Body of pancreas (tissue), 4 donors: ENCODE measurements at regions of chr15 and their contacts with region 1.

Region 1: DNA sequence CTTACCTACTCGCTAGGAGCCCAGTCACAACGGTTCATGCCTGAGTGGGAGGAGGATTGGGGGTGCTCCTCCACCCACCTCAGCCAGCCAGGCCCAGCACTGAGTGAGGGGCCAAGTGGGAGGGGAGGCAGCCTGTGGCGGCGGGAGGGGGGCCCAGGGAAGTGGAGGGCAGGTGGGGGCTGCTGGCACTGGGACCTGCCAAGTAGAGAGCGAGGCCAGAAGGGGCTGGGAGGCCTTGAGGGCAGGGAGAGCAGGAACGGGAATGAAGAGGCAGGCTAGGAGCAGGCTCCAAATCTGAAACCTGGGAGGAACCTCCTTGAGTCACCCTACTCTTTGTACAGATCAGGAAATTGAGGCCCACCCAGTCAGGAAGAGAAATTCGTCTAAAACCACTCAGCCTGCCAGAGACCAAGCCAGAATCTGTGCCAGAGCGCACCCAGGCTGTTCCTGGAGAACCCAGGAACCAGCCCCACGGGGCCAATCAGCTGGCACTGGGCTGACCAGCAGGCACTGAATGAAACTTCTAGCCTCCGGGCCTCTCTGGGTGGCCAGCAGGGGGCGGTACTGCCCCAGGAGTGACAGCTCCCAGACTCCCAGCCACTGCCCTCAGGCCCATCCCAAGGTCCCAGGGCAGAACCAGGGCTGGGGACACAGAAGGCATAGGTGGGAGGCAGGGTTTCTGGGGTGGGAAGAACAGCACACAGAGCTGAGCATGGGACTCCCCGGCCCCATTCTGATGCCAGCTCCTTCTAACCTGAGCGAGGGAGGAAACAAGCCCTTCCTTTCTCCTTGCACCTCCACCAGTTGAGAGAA is 14.8 kb upstream of the CYP11A1 start:
- DNase-seq: peak; percentile 82 to 88 (median 85)
- ATAC-seq: peak; percentile 81
- H3K4me3 ChIP-seq: no peak overlapping the region
- H3K27ac ChIP-seq: no peak overlapping the region
- H3K4me1 ChIP-seq: no peaks in the 10 kb centered on the region
- H3K27me3 ChIP-seq: no peaks in the 10 kb centered on the region
- CTCF ChIP-seq: peak; percentile 73 to 91 (median 83)
- POLR2A ChIP-seq: no peak

Region 2: DNA sequence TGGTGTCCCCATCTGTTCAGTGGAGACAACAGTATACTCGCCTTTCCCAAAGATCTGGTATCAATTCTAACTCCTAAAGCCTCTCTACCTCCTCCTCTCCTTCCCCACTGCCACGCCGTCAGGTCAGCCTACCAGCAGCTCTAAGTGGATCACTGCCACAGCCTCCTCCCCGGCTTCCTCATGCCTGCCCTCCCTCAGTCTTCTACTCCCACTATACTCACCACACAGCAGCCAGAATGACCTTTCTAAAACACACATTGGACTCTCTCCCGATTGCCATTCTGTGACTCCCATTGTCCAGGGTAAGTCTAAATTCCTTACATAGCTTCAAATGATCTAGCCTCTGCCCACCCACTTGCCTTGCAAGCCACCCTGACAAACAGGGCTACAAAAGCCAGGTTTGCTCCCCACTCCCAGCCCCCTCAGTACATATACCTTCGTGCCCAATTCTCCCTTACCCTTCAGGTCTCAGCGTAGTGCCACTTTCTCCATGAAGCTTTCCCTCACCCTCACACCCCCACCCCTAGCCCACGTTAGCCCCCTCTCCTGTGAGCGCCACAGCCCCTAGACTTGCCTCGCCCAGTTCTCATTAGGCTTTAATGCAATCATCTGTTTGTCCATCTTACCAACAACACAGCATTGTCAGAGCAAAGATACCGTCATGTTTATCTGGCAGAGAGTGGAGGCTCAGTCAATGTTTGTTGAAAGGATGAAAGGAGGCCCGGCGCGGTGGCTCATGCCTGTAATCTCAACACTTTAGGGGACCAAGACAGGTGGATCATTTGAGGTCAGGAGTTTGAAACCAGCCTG is 61.1 kb after region 1 on chr15:
- intact Hi-C with region 1: loop called (anchors 5 kb)
- DNase-seq: no peak
- ATAC-seq: no peak
- H3K4me3 ChIP-seq: no peak overlapping the region
- H3K27ac ChIP-seq: no peak overlapping the region
- H3K4me1 ChIP-seq: peaks cover 6% of the 10 kb centered on the region
- H3K27me3 ChIP-seq: no peaks in the 10 kb centered on the region
- CTCF ChIP-seq: no peak
- POLR2A ChIP-seq: no peak